ENCODE measurements at regions of chr2 and their contacts with region 1.

Region 1: GRCh38 chr2:68909793-68910674 is 38.8 kb upstream of the BMP10 start:
- DNase-seq: peak; percentile 45
- ATAC-seq: peak; percentile 58
- H3K4me3 Mint-ChIP-seq: no peak overlapping the region
- H3K27ac Mint-ChIP-seq: peak overlapping the region; percentile 60
- H3K4me1 Mint-ChIP-seq: peaks cover 34% of the 10 kb centered on the region
- H3K27me3 Mint-ChIP-seq: no peaks in the 10 kb centered on the region
- CTCF ChIP-seq: no peak

Region 2: GRCh38 chr2:68251187-68251854 is 658.7 kb before region 1 on chr2:
- CTCF ChIA-PET with region 1: no interaction called
- POLR2A ChIA-PET with region 1: no interaction called
- intact Hi-C with region 1: loop called (anchors 5 kb)
- DNase-seq: peak; percentile 41
- ATAC-seq: peak; percentile 66
- H3K4me3 Mint-ChIP-seq: peak overlapping the region; percentile 89
- H3K27ac Mint-ChIP-seq: peak overlapping the region; percentile 92
- H3K4me1 Mint-ChIP-seq: peaks cover 35% of the 10 kb centered on the region
- H3K27me3 Mint-ChIP-seq: no peaks in the 10 kb centered on the region
- CTCF ChIP-seq: no peak

Region 3: GRCh38 chr2:68594674-68595492 is 315.2 kb before region 1 on chr2:
- CTCF ChIA-PET with region 1: interaction called, 9 read pairs
- POLR2A ChIA-PET with region 1: no interaction called
- intact Hi-C with region 1: loop called (anchors 2 kb)
- DNase-seq: peak; percentile 21
- ATAC-seq: peak; percentile 52
- H3K4me3 Mint-ChIP-seq: peak overlapping the region; percentile 0
- H3K27ac Mint-ChIP-seq: no peak overlapping the region
- H3K4me1 Mint-ChIP-seq: peaks cover 12% of the 10 kb centered on the region
- H3K27me3 Mint-ChIP-seq: peaks cover 5% of the 10 kb centered on the region
- CTCF ChIP-seq: peak; percentile 64

Region 4: GRCh38 chr2:68721482-68722101 is 188.4 kb before region 1 on chr2:
- CTCF ChIA-PET with region 1: interaction called, 4 read pairs
- POLR2A ChIA-PET with region 1: interaction called, 11 read pairs
- intact Hi-C with region 1: no loop called
- DNase-seq: no peak
- ATAC-seq: peak; percentile 82
- H3K4me3 Mint-ChIP-seq: peak overlapping the region; percentile 38
- H3K27ac Mint-ChIP-seq: peak overlapping the region; percentile 76
- H3K4me1 Mint-ChIP-seq: peaks cover 77% of the 10 kb centered on the region
- H3K27me3 Mint-ChIP-seq: no peaks in the 10 kb centered on the region
- CTCF ChIP-seq: no peak

Region 5: DNA sequence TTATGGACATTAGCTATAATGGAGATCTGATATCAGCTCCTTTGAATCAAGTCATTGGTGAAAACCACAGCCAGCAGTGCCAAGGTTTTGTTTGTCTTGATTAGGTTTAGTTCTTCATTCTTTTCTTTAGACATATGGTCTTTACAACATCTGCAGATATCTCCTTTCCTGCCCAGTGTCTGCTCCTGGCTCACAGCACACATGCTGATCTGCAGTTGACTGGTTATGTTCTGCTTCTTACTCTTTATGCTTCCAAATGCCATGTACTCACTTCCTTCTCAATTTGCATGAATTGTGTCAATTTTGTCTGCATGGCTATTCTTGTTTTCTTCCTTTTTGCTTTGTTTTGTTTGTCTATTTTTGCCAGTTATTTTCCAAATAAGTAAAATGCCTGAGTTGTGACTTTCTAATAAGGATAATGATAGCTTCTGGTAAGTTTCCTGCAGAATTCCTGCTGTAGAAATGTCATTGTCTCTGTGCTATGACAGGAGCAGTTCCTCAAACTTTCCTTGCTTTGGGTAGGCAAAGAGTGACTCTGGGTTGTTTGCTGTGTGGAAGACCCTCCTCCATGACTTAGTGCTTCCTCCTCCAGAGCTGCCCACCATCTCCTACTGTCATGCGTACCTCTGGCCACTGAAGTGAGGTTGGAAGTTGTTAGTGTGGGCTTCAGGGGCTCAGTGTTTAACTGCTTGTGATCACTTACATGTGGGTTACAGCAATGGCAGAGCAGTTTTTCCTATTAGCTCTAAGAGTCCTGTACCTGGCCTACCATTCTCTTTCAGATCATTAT is 167.2 kb before region 1 on chr2:
- CTCF ChIA-PET with region 1: interaction called, 10 read pairs
- POLR2A ChIA-PET with region 1: interaction called, 32 read pairs
- intact Hi-C with region 1: no loop called
- DNase-seq: no peak
- ATAC-seq: peak; percentile 49
- H3K4me3 Mint-ChIP-seq: peak overlapping the region; percentile 55
- H3K27ac Mint-ChIP-seq: peak overlapping the region; percentile 87
- H3K4me1 Mint-ChIP-seq: peaks cover 91% of the 10 kb centered on the region
- H3K27me3 Mint-ChIP-seq: no peaks in the 10 kb centered on the region
- CTCF ChIP-seq: no peak

Region 6: DNA sequence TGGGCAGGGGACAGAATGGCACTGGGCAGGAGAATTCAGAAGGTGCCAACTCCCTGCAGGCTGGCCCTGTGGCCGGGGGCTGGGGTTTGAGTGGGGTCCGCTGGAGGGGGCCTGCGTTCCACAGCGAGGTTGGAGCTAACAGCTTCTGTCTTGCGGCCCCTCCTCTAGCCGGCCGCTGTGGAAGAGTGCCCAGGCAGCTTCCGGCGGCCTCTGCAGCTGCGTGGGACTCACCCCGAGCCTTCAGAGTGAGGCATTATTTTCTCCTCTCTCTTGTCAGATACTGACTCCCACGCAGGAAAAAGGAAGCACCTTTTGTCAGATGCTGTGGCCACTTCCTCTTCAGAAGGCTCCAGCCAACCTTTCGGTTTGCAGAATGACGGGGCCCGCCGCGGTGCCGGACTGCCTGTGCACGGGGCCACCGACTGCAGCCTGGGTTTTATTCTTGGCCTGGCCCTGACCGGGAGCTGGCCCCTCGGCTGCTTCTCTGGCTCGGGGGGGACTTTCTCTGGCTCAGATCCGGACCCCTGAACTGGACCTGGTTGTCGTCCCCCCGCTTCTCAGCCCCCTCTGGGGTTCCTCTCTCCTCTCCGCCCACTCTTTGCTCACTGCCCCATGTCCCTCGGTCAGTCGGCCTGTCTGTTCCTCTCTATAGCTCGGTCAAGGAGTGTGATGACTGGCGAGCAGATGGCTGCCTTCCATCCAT is 135.3 kb before region 1 on chr2:
- CTCF ChIA-PET with region 1: interaction called, 40 read pairs
- POLR2A ChIA-PET with region 1: interaction called, 119 read pairs
- intact Hi-C with region 1: loop called (anchors 1 kb)
- DNase-seq: peak; percentile 71
- ATAC-seq: peak; percentile 78
- H3K4me3 Mint-ChIP-seq: peak overlapping the region; percentile 98
- H3K27ac Mint-ChIP-seq: peak overlapping the region; percentile 96
- H3K4me1 Mint-ChIP-seq: peaks cover 82% of the 10 kb centered on the region
- H3K27me3 Mint-ChIP-seq: no peaks in the 10 kb centered on the region
- CTCF ChIP-seq: no peak

Region 7: DNA sequence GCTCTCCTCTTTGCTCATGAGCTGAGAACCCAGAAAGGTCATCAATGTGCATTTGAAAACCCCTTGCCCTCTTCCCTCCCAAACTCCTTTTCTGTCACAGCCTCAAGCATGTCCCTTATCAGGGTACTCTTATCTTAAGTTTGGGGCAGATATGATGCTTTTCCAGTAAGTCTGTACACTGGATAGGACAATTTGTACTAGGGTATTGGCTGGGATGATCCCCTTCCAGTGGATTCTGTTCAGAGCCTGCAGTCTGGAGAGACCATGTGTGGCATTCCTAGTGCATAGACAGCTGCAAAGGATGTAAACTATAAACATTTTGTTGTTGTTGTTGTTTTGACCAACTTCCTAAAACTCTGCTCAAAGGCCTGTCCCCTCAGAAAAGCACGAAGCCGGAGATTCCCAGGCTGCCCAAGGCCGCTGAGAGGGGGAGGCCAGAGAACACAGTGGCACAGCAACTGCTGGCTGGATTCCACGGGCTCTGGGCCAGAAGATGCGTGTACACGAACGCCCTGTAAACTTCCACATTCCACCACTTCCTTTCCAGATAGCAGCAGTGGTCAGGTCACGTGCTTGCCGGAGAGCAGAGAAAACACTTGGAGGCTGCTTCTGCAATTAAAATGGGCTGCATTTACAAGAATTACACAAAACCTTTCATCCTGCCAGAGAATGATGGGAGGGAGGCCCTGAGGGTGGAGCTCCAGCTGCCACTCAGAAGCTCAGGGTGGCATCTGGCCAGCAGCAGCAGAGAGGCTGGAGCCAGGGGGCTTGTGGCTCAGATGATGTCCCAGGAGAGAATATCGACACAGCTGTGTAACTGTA is 80.9 kb before region 1 on chr2:
- CTCF ChIA-PET with region 1: interaction called, 5 read pairs
- POLR2A ChIA-PET with region 1: interaction called, 74 read pairs
- intact Hi-C with region 1: loop called (anchors 2 kb)
- DNase-seq: no peak
- ATAC-seq: peak; percentile 29
- H3K4me3 Mint-ChIP-seq: peak overlapping the region; percentile 8
- H3K27ac Mint-ChIP-seq: peak overlapping the region; percentile 76
- H3K4me1 Mint-ChIP-seq: peaks cover 78% of the 10 kb centered on the region
- H3K27me3 Mint-ChIP-seq: no peaks in the 10 kb centered on the region
- CTCF ChIP-seq: no peak